CD4-positive, alpha-beta T cell (primary cell): ENCODE measurements at regions of chr5 and their contacts with region 1.

Region 1: DNA sequence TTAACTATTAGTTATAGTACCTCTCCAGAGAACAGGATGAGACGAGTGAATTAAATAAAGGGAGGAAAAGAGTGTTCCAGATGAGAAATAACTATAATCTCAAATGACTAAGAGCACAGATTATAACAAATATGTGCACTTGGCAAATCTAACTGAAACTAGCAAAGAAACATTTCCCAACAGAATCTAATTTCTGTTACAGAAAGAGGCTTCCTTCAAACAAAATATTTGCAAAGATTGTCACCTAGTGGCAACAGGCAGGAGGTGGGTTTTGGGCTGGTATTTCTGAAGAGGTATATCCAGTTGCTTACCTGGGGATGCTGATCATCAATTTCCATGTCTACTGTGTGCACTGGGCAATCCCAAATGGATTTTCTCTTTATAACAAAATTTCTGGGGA is 5.6 kb upstream of the SPDL1 start:
- DNase-seq: no peak
- ATAC-seq: no peak
- H3K4me3 ChIP-seq: no peak overlapping the region
- H3K4me3 Mint-ChIP-seq: no peak overlapping the region
- H3K27ac ChIP-seq: no peak overlapping the region
- H3K27ac Mint-ChIP-seq: no peak overlapping the region
- H3K4me1 ChIP-seq: no peaks in the 10 kb centered on the region
- H3K4me1 Mint-ChIP-seq: peaks cover 10% of the 10 kb centered on the region
- H3K27me3 ChIP-seq: peaks cover 4 to 25% of the 10 kb centered on the region in 2 experiments
- H3K27me3 Mint-ChIP-seq: peaks cover 43% of the 10 kb centered on the region
- CTCF ChIP-seq: no peak

Region 2: DNA sequence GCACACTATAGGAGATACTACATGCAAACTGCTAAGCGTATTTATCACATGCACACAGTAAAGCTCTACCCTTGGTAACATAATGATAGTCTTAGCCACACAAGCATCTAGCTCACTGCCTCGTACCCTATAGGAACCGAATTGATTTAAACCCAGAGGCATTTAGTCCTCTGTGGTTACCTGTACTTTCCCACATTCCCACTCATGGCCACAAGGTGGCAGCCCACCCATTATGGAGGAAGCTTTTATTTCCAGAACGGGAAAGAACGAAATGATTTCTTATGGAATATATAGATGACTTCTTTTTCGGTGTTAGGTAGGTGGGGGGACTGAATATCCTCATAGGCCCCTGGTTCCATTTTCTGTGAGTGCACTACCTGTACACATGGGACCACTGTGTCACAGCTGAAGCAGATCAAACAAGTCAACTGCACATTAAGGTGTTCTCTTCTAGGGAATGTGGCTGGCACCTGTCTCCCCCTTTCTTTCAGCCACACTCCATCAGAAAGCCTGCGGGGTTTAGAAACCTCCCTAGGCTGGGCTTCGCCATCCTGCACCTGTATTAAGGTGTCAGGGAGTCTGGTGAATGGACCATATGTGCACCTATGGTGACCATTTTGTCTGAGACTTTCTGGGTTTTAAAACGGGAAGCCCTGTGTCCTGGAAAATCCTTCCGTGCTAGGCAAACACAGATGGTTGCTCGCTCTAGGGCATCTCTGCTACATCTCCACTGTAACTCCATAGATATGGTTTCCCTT is 590.2 kb before region 1 on chr5:
- CTCF ChIA-PET with region 1: interaction called, 4 read pairs
- POLR2A ChIA-PET with region 1: no interaction called
- intact Hi-C with region 1: loop called in 1 of 2 experiments (anchors 2 kb)
- DNase-seq: peak in 13 of 14 experiments; percentile 7 to 58 (median 30)
- ATAC-seq: peak; percentile 37
- H3K4me3 ChIP-seq: no peak overlapping the region
- H3K4me3 Mint-ChIP-seq: no peak overlapping the region
- H3K27ac ChIP-seq: no peak overlapping the region
- H3K27ac Mint-ChIP-seq: no peak overlapping the region
- H3K4me1 ChIP-seq: no peaks in the 10 kb centered on the region
- H3K4me1 Mint-ChIP-seq: no peaks in the 10 kb centered on the region
- H3K27me3 ChIP-seq: no peaks in the 10 kb centered on the region
- H3K27me3 Mint-ChIP-seq: peaks cover 16% of the 10 kb centered on the region
- CTCF ChIP-seq: peak; percentile 91

Region 3: GRCh38 chr5:171221941-171222340 is 1644.0 kb after region 1 on chr5:
- CTCF ChIA-PET with region 1: no interaction called
- POLR2A ChIA-PET with region 1: no interaction called
- intact Hi-C with region 1: no loop called
- DNase-seq: no peak
- ATAC-seq: no peak
- H3K4me3 ChIP-seq: no peak overlapping the region
- H3K4me3 Mint-ChIP-seq: no peak overlapping the region
- H3K27ac ChIP-seq: no peak overlapping the region
- H3K27ac Mint-ChIP-seq: no peak overlapping the region
- H3K4me1 ChIP-seq: no peaks in the 10 kb centered on the region
- H3K4me1 Mint-ChIP-seq: peaks cover 5% of the 10 kb centered on the region
- H3K27me3 ChIP-seq: peaks cover 5 to 10% of the 10 kb centered on the region in 2 experiments
- H3K27me3 Mint-ChIP-seq: peaks cover 42% of the 10 kb centered on the region
- CTCF ChIP-seq: no peak